Sigmoid colon (tissue), 7 donors: ENCODE measurements at regions of chr5 and their contacts with region 1.

Region 1: DNA sequence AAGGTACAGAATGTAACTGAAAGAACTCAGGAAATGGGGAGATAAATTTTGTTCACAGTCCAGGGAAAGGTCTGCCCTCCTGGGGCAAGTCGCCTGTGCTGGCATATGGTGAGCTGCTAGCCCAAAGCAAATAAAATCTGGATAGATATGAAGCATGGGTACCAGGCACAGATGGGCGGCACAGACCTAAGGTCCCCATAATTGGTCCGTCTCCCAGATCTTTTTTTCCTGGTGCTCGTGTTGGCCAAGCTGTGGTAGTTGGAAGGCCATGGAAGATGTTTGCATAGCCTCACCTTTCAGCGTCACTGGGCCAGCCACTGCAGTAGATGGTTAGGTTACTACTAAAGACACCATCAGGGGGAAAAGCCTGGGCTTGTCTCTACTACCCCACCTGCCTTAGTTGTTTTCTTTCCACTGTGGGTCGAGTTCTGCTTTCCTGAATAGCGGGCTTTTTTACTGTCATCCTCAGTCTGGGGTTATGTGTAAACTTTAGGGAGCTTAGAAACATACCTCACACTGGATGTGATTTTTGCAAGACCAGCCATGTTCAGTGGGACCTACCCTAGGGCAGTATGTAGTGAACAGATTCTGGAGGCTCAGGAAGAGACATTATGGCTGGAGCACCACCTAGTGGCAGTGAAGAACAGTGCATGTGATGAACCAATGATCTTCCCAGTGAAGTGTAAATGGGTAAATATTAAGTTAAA is 24.2 kb upstream of the GLRX start:
- DNase-seq: peak; percentile 85
- H3K4me3 ChIP-seq: no peak overlapping the region
- H3K27ac ChIP-seq: no peak overlapping the region
- H3K4me1 ChIP-seq: no peaks in the 10 kb centered on the region
- H3K27me3 ChIP-seq: no peaks in the 10 kb centered on the region
- CTCF ChIP-seq: peak; percentile 86 to 93 (median 90)
- EP300 ChIP-seq: no peak
- POLR2A ChIP-seq: no peak

Region 2: DNA sequence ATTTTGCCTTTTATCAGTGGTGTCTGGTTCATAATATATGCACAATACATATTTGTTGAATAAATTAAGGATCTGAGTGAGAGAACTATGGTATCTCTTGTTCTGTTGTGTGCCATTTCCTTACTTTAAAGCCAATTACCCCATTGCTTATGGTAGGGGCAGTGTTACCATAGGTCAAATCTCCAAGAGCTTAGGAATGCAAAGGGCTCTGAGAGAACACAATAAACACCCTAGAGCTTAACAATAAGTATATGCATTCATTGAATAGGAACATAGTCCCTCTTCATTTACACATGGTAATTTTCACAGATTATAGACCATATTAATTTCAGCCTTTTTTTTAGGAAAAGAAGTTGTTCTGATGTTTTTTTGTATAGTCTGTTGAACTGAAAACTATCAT is 674.0 kb before region 1 on chr5:
- intact Hi-C with region 1: no loop called
- DNase-seq: no peak
- H3K4me3 ChIP-seq: no peak overlapping the region
- H3K27ac ChIP-seq: no peak overlapping the region
- H3K4me1 ChIP-seq: no peaks in the 10 kb centered on the region
- H3K27me3 ChIP-seq: no peaks in the 10 kb centered on the region
- CTCF ChIP-seq: no peak
- EP300 ChIP-seq: no peak
- POLR2A ChIP-seq: no peak

Region 3: GRCh38 chr5:95554647-95555548 is 291.8 kb before region 1 on chr5 and contains the starts of genes ARSK and SKIC3:
- intact Hi-C with region 1: loop called (anchors 10 kb)
- DNase-seq: peak; percentile 98
- H3K4me3 ChIP-seq: peak within 1 kb of the TSS; percentile 59 to 90 (median 74)
- H3K27ac ChIP-seq: peak within 1 kb of the TSS; percentile 81 to 93 (median 90)
- H3K4me1 ChIP-seq: peaks cover 0 to 28% (median 20%) of the 10 kb centered on the region in 4 donors
- H3K27me3 ChIP-seq: no peaks in the 10 kb centered on the region
- CTCF ChIP-seq: peak in 3 of 4 experiments; percentile 27 to 32 (median 27)
- EP300 ChIP-seq: peak in 1 of 4 donors; percentile 61
- POLR2A ChIP-seq: peak; percentile 70 to 74
- total RNA-seq, gene ARSK: 6.7 to 13.3 (median 9.9) TPM
- total RNA-seq, gene SKIC3: 55.8 to 103 (median 71.3) TPM

Region 4: GRCh38 chr5:95664204-95664786 is 182.4 kb before region 1 on chr5:
- intact Hi-C with region 1: loop called (anchors 1 kb)
- DNase-seq: no peak
- H3K4me3 ChIP-seq: no peak overlapping the region
- H3K27ac ChIP-seq: peak overlapping the region; percentile 15 to 68 (median 49)
- H3K4me1 ChIP-seq: peaks cover 0 to 26% (median 14%) of the 10 kb centered on the region in 4 donors
- H3K27me3 ChIP-seq: no peaks in the 10 kb centered on the region
- CTCF ChIP-seq: peak; percentile 63 to 81 (median 74)
- EP300 ChIP-seq: no peak
- POLR2A ChIP-seq: no peak

Region 5: DNA sequence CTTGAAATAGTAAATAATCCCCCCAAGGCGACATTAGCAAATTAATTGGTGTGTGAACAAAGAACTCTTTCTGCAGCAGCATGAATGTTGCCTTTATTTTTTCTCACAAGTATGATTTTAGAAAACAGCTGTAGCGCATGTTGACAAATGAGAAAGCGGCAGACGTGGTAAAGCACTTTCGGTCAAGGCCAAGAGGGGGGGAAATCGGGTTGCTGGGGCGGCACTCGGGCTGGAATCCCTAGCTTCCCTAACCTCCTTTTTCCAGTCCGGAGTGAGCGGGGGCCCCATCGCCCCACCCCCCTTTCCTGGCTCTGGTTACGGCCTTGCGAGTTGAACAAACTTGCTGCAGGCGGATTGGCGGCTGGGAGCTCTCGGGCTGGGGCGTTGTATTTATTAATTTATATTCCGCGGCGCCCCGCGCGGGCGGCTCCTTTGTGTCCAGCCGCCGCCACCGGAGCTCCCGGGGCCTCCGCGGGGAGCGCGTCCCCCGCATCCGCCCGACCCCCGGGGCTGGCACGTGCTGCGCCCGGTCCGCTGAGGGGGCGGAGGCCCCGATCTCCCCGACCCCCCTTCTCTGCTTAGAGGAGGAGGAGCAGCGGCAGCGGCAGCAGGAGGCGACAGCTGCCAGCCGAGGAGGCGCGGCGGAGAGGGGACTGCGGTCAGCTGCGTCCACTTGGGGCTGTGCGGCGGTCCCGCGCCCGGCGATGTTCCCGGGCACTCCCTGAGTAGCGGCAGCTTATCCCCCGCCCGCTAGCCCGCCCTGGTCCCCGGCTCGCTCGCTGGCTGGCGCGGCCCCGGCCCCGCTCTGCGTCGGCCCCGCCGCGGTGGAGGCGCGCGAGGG is 115.8 kb before region 1 on chr5 and contains the start of gene RHOBTB3:
- intact Hi-C with region 1: loop called (anchors 5 kb)
- DNase-seq: peak; percentile 96
- H3K4me3 ChIP-seq: peak within 1 kb of the TSS; percentile 71 to 92 (median 86)
- H3K27ac ChIP-seq: peak within 1 kb of the TSS; percentile 89 to 98 (median 94)
- H3K4me1 ChIP-seq: peaks cover 0 to 61% (median 46%) of the 10 kb centered on the region in 4 donors
- H3K27me3 ChIP-seq: no peaks in the 10 kb centered on the region
- CTCF ChIP-seq: no peak
- EP300 ChIP-seq: peak in 1 of 4 donors; percentile 28
- POLR2A ChIP-seq: peak; percentile 22 to 75
- total RNA-seq, gene RHOBTB3: 75.6 to 151 (median 111) TPM

Region 6: GRCh38 chr5:95770830-95771708 is 75.6 kb before region 1 on chr5:
- intact Hi-C with region 1: no loop called
- DNase-seq: no peak
- H3K4me3 ChIP-seq: no peak overlapping the region
- H3K27ac ChIP-seq: peak overlapping the region in 3 of 4 donors; percentile 25 to 48 (median 45)
- H3K4me1 ChIP-seq: peaks cover 0 to 17% (median 7%) of the 10 kb centered on the region in 4 donors
- H3K27me3 ChIP-seq: no peaks in the 10 kb centered on the region
- CTCF ChIP-seq: no peak
- EP300 ChIP-seq: no peak
- POLR2A ChIP-seq: no peak

Region 7: GRCh38 chr5:95781101-95781583 is 65.6 kb before region 1 on chr5:
- intact Hi-C with region 1: loop called (anchors 1 kb)
- DNase-seq: peak; percentile 93
- H3K4me3 ChIP-seq: no peak overlapping the region
- H3K27ac ChIP-seq: peak overlapping the region; percentile 56 to 60 (median 58)
- H3K4me1 ChIP-seq: peaks cover 0 to 14% (median 7%) of the 10 kb centered on the region in 4 donors
- H3K27me3 ChIP-seq: no peaks in the 10 kb centered on the region
- CTCF ChIP-seq: peak; percentile 83 to 92 (median 86)
- EP300 ChIP-seq: no peak
- POLR2A ChIP-seq: no peak

Region 8: DNA sequence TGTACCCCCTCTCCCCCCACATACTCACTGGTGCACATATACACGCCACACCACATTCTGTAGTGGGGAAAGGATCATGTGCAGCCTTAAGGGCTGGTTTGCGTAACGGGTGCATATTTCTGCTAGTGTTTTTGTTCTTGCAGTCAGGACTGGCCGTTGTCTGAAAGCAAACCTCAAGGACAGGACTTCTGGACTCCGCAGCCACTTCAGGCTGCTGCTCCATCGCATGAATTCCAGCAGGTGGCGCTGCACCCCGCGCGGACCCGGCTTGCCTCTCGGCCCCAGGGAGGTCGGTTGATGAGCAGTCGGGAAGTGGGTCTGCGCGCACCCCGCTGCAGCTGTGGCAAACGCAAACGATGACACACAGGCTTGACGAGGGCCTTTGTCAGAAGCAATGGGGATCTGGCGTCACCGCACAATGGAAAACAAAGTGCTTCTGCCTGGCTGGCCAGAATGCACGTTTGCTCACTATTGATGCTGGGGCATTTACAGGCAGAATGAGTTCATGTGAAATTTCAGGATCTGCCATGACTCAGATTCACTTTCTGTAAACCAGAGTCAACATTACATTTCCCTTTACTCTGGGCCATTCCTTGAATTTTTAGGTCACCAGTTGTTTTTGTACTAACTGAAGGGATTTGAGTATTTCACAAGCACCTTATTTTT is 12.1 kb after region 1 on chr5:
- intact Hi-C with region 1: no loop called
- DNase-seq: peak; percentile 96
- H3K4me3 ChIP-seq: peak overlapping the region in 3 of 4 donors; percentile 16 to 33 (median 30)
- H3K27ac ChIP-seq: peak overlapping the region; percentile 72 to 83 (median 80)
- H3K4me1 ChIP-seq: peaks cover 0 to 31% (median 23%) of the 10 kb centered on the region in 4 donors
- H3K27me3 ChIP-seq: no peaks in the 10 kb centered on the region
- CTCF ChIP-seq: peak; percentile 96 to 98 (median 98)
- EP300 ChIP-seq: peak in 2 of 4 donors; percentile 58 to 84
- POLR2A ChIP-seq: no peak